BJ (cell line): ENCODE measurements at regions of chr5 and their contacts with region 1.

Region 1: GRCh38 chr5:137212471-137212870 is 286.7 kb downstream of the SPOCK1 start:
- DNase-seq: no peak
- H3K4me3 ChIP-seq: no peak overlapping the region
- H3K27me3 ChIP-seq: no peaks in the 10 kb centered on the region; the same call in 1 of the 2 replicates
- CTCF ChIP-seq: no peak

Region 2: GRCh38 chr5:137179203-137179602 is 33.3 kb before region 1 on chr5:
- CTCF ChIA-PET with region 1: no interaction called
- POLR2A ChIA-PET with region 1: no interaction called
- DNase-seq: no peak
- H3K4me3 ChIP-seq: no peak overlapping the region
- H3K27me3 ChIP-seq: no peaks in the 10 kb centered on the region
- CTCF ChIP-seq: no peak

Region 3: DNA sequence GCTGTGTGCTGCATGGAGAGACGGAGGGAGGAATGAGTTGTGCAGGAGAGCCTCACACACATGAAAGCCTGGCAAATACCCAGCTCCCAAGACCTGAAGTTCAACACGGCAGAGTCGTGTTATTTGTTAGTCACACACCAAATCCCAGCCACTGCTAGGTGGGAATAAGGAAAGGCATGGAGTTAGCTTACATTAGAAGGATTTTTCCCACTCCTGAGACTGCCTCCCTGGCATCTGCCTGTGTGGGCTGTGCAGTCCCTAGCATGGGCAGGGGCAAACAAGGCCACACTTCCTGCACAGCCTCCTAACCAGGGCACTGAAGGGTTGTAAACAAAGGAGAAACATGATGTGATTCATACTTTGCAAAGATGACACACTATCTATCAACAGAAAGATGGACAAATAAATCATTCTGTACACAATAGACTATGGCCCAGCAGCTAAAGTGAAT is 20.2 kb before region 1 on chr5:
- CTCF ChIA-PET with region 1: interaction called, 3 read pairs
- POLR2A ChIA-PET with region 1: interaction called, 13 read pairs
- DNase-seq: peak; percentile 31
- H3K4me3 ChIP-seq: no peak overlapping the region
- H3K27me3 ChIP-seq: no peaks in the 10 kb centered on the region
- CTCF ChIP-seq: no peak